IMR-90 (cell line): ENCODE measurements at regions of chr6 and their contacts with region 1.

Region 1: GRCh38 chr6:593139-593906 is 63.6 kb downstream of the HUS1B start:
- DNase-seq: peak; percentile 56
- ATAC-seq: peak; percentile 67
- H3K4me3 ChIP-seq: no peak overlapping the region
- H3K27ac ChIP-seq: no peak overlapping the region
- H3K4me1 ChIP-seq: peaks cover 3% of the 10 kb centered on the region
- H3K27me3 ChIP-seq: no peaks in the 10 kb centered on the region
- CTCF ChIP-seq: peak; percentile 78
- POLR2A ChIP-seq: no peak
- RAD21 ChIP-seq: peak; percentile 84

Region 2: DNA sequence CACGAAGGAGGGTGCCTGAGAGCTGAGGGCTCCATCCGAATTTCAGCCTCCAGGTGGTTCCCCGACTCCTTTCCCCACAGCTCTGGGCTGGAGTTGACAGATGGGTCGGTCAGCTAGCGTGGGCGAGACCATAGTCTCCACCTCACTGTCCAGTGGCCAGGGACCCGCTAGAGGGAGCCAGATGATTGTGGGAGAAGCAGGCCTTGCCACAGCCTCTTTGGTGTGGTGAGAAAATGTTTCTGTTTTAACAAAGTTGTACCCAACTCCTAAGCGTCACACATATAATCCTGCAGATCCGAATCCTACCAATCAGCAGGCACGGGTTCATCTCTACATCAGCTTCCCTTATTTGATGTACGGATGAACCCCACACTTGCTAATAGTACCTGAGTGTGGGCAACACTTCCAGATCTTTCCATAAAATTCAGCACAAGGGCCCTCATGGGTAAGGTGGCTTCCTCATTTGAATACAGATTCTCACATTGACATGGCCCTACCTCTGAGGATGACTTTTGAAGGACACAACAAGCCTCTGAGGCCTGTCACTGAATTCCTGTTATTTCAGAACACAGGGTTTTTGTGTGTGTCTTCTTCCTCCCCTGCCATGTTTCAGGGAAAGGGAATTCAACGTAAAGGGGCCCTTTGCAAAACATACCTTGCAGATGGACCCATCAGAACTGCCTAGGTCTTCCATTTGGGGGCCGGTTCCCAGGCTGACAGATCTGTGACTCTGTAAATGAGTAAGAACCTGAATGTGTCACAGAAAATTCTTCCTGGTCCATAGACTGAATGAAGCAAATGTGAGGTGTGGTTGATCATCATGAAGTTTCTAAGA is 404.3 kb before region 1 on chr6:
- CTCF ChIA-PET with region 1: interaction called, 4 read pairs
- POLR2A ChIA-PET with region 1: no interaction called
- dilution Hi-C with region 1: no loop called
- in situ Hi-C with region 1: no loop called
- intact Hi-C with region 1: loop called (anchors 5 kb)
- DNase-seq: peak; percentile 79
- ATAC-seq: peak; percentile 96
- H3K4me3 ChIP-seq: no peak overlapping the region
- H3K27ac ChIP-seq: no peak overlapping the region
- H3K4me1 ChIP-seq: peaks cover 3% of the 10 kb centered on the region; the same call in 1 of the 2 replicates
- H3K27me3 ChIP-seq: peaks cover 8% of the 10 kb centered on the region; the same call in 1 of the 2 replicates
- CTCF ChIP-seq: peak; percentile 95
- POLR2A ChIP-seq: peak; percentile 54; the same call in 1 of the 2 replicates
- RAD21 ChIP-seq: peak; percentile 97

Region 3: DNA sequence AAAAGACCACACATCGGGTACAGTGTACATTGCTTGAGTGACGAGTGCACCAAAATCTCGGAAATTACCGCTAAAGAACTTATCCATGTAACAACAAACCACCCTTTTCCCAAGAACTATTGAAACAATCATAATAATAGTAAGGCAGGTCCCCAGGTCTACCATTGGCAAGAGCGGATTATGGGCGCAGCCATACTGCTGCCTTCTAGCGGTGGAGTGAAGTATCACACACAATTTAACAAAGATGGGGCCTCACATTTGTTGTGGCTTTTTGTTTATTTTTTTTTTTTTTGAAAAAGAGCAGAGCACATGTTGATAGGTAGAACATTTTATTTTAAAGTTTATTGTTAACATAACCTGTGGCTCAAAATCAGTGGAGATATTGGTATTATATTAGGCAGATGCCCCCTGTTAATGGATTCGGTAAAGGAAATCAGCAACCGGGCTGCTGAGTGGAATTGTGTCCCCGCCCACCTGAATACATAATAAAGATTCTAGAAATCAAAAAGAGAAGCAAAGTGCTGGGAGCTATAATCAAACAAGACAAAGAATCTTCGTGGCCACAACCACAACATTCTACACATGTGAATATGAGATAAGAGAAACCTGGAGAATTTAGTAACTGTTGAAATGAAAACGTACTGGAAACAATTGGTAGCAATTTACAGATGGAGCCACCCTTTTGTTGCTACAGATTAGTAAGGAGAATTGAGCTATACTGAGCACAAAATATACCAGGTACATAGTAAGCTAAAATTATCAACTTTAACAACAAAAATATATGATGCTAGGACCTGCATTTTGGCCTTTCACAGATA is 193.8 kb after region 1 on chr6:
- CTCF ChIA-PET with region 1: no interaction called
- POLR2A ChIA-PET with region 1: no interaction called
- dilution Hi-C with region 1: no loop called
- in situ Hi-C with region 1: loop called (anchors 10 kb)
- intact Hi-C with region 1: loop called (anchors 1 kb)
- DNase-seq: peak; percentile 3
- ATAC-seq: no peak
- H3K4me3 ChIP-seq: no peak overlapping the region
- H3K27ac ChIP-seq: no peak overlapping the region
- H3K4me1 ChIP-seq: no peaks in the 10 kb centered on the region
- H3K27me3 ChIP-seq: peaks cover 3% of the 10 kb centered on the region; the same call in 1 of the 2 replicates
- CTCF ChIP-seq: peak; percentile 44
- POLR2A ChIP-seq: no peak
- RAD21 ChIP-seq: peak; percentile 44

Region 4: DNA sequence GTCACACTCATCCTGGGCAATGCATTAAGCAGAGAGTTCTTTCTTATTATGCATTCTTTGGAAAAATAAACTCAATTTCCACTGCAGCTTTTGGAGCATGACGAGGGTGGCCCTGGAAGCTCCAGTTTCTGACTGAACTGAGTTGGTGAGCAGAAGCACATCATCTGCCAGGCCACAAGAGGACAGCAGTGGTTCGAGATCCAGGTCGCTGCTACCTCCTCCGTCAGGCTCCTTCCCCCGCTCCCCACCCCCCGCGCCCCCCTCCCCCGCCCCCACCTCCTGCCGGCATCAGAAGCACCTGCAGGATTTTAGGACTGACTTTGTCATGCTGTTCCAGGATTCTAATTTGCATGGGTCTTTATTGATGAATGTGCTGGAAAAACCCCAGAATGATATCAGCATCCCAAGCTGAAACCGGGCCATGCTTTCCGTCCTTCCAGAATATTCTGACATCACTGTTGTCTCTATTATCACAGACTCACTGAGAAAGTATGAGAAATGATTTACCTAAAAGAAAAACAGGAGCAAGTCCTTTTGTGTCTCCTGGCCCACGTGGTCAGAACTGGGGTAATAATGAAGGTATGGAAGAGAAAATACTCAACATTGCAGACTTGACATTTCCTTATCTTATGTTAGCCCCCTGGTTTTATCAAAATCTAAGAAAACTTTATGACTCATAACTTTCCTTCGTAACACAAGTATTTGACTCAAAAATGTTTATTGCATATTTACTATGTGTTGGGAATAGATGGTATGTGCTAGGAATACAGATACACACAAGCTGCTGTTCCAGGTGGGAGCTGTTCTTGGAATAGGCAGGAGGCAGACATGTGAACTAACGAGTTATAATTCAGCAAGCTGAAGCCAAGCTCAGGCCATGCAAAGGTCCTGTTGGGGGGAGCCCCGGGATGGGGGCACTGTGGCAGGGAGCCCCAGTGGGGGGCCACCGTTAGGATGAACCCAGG is 319.8 kb after region 1 on chr6:
- CTCF ChIA-PET with region 1: interaction called, 3 read pairs
- POLR2A ChIA-PET with region 1: no interaction called
- dilution Hi-C with region 1: no loop called
- in situ Hi-C with region 1: no loop called
- intact Hi-C with region 1: loop called (anchors 5 kb)
- DNase-seq: peak; percentile 47
- ATAC-seq: peak; percentile 88
- H3K4me3 ChIP-seq: no peak overlapping the region
- H3K27ac ChIP-seq: no peak overlapping the region
- H3K4me1 ChIP-seq: peaks cover 4% of the 10 kb centered on the region; the same call in 1 of the 2 replicates
- H3K27me3 ChIP-seq: peaks cover 12% of the 10 kb centered on the region
- CTCF ChIP-seq: peak; percentile 69
- POLR2A ChIP-seq: no peak
- RAD21 ChIP-seq: peak; percentile 78

Region 5: GRCh38 chr6:1396952-1397868 is 803.9 kb after region 1 on chr6:
- CTCF ChIA-PET with region 1: interaction called, 6 read pairs
- POLR2A ChIA-PET with region 1: no interaction called
- dilution Hi-C with region 1: no loop called
- in situ Hi-C with region 1: loop called (anchors 10 kb)
- intact Hi-C with region 1: no loop called
- DNase-seq: peak; percentile 98
- ATAC-seq: peak; percentile 55
- H3K4me3 ChIP-seq: no peak overlapping the region
- H3K27ac ChIP-seq: no peak overlapping the region
- H3K4me1 ChIP-seq: peaks cover 19% of the 10 kb centered on the region
- H3K27me3 ChIP-seq: no peaks in the 10 kb centered on the region; the same call in 1 of the 2 replicates
- CTCF ChIP-seq: peak; percentile 98
- POLR2A ChIP-seq: peak; percentile 46; the same call in 1 of the 2 replicates
- RAD21 ChIP-seq: peak; percentile 93